Cardiac septum (tissue), 1 donor: ENCODE measurements at regions of chr10 and their contacts with region 1.

Region 1: GRCh38 chr10:129258283-129258923 is 208.6 kb upstream of the MGMT start:
- DNase-seq: no peak

Region 2: GRCh38 chr10:129046065-129046681 is 212.2 kb before region 1 on chr10:
- intact Hi-C with region 1: loop called (anchors 5 kb)
- DNase-seq: no peak